ENCODE measurements at regions of chr6 and their contacts with region 1.

Region 1: GRCh38 chr6:89352278-89353117 is at the start of gene UBE2J1:
- DNase-seq: peak; percentile 95 to 97
- ATAC-seq: peak; percentile 94 to 97 (median 95)
- H3K4me3 ChIP-seq: peak within 1 kb of the TSS; percentile 92
- H3K27ac ChIP-seq: peak within 1 kb of the TSS; percentile 98
- H3K4me1 ChIP-seq: peaks cover 29% of the 10 kb centered on the region
- H3K27me3 ChIP-seq: no peaks in the 10 kb centered on the region
- CTCF ChIP-seq: no peak
- total RNA-seq, gene UBE2J1: 11.5 to 21.6 (median 17.4) TPM

Region 2: DNA sequence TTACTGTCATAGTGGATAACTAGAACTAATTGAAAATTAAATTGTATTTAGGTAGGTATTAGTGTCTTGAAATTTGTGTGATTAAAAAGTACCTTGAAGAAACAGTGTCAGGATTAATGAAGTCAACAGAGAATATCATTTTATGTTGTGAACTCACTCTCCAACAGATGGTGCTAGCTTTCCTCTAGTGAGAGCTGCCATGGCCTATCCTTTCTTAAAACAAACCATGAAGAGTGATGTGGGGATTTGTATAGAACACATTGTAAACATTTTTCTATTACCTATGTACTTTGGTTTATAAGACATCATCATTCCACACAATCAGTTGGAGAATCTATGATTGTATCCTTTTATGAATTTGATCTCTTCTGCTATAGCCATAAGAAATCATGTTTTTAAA is 229.9 kb before region 1 on chr6:
- intact Hi-C with region 1: loop called in 1 of 2 experiments (anchors 10 kb)
- DNase-seq: no peak
- ATAC-seq: peak; percentile 56 to 75 (median 70)
- H3K4me3 ChIP-seq: no peak overlapping the region
- H3K27ac ChIP-seq: no peak overlapping the region
- H3K4me1 ChIP-seq: peaks cover 12% of the 10 kb centered on the region
- H3K27me3 ChIP-seq: no peaks in the 10 kb centered on the region
- CTCF ChIP-seq: peak; percentile 66

Region 3: DNA sequence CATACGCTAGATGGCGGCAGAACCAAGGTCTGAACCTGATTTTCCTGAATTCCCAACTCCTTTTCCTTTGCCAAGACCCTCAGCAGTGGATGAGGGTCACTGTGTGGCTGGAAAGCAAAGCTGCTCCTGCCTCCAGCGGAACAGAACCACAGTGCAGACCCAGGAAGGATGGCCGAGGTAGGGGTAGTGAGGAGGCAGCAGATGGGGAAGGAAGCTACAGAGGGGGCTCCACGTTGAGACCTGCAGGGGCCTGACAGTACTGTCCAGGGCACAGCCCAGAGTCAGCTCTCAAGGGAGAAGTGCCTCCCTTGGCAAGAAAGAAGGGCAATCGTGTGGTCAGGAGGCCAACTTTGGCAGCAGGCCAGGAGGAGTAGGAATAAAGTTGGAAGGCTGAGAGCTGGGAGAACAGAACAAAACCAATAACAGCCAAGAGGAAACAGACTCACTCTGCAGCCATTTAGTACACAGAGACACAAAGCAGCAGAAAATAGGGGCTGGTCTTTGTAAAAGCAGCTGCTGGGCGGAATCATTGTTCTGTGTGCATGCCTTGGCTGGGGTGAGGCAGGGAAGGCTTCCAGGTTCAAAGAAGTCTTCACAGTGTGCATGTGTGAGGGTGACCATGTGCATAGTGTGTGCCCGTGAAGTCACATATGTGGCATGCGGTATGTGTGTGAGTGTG is 40.5 kb before region 1 on chr6:
- intact Hi-C with region 1: loop called in 1 of 2 experiments (anchors 5 kb)
- DNase-seq: peak; percentile 55 to 68
- ATAC-seq: peak; percentile 50 to 71 (median 67)
- H3K4me3 ChIP-seq: no peak overlapping the region
- H3K27ac ChIP-seq: peak overlapping the region; percentile 62
- H3K4me1 ChIP-seq: peaks cover 26% of the 10 kb centered on the region
- H3K27me3 ChIP-seq: no peaks in the 10 kb centered on the region
- CTCF ChIP-seq: peak; percentile 53

Region 4: DNA sequence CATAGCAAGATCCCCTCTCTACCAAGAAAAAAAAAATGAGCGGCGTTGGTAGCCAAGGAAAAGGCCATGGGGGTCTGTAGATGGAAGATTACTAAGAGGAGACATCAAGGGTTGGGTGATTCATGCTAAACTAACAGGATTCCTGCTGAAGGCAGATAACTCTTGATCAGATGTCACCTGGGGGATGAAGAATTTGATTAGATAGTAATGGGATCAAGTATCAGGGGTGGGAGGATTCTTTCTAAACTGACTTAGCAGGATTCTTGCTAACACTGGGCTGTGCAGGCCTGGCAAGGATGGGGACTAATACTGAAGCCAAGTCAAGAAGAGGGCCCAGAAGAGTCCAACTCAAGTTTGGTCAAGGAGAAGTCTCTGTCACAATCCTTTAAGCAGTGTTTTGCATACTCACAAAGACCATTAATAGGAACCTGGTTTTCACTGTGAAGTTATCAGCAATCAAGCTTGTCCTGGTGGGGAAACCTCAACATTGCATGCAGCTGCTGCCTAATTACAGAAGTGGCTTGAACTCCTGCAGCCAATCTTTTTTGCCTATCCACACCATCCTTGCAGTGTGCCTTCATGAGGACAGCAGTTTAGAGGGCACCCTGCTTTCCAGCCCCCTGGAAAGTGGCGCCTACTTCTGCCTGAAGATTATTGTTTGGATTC is 141.8 kb after region 1 on chr6:
- intact Hi-C with region 1: no loop called
- DNase-seq: no peak
- ATAC-seq: no peak
- H3K4me3 ChIP-seq: no peak overlapping the region
- H3K27ac ChIP-seq: no peak overlapping the region
- H3K4me1 ChIP-seq: no peaks in the 10 kb centered on the region
- H3K27me3 ChIP-seq: no peaks in the 10 kb centered on the region
- CTCF ChIP-seq: no peak